ENCODE measurements at regions of chr15 and their contacts with region 1.

Region 1: DNA sequence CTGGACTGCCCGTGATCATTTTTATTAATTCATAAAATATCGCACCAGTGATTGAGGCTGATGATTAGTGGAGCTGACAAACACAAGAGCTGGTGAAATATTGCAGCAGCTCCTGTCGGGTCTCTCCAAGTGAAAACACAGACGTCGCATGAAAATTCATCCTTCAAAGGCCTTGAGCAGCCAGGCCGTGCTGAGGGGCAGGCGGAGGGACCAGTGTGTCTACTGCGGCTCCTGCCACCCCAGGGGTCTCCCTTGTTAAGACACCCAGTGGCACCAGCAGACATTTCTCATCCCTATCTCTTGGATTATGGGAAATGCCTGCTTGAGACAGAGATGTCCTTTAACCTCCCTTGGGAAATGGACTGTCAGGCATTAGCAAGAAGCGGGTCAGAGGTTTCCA is 289.4 kb upstream of the TLE3 start:
- DNase-seq: no peak
- ATAC-seq: no peak
- H3K4me3 ChIP-seq: no peak overlapping the region
- H3K4me3 Mint-ChIP-seq: no peak overlapping the region
- H3K27ac ChIP-seq: peak overlapping the region in 1 of 2 donors; percentile 30
- H3K27ac Mint-ChIP-seq: no peak overlapping the region
- H3K4me1 ChIP-seq: peaks cover 20 to 22% of the 10 kb centered on the region in 2 donors
- H3K4me1 Mint-ChIP-seq: peaks cover 20% of the 10 kb centered on the region
- H3K27me3 ChIP-seq: no peaks in the 10 kb centered on the region
- H3K27me3 Mint-ChIP-seq: no peaks in the 10 kb centered on the region
- CTCF ChIP-seq: no peak

Region 2: GRCh38 chr15:70327856-70328678 is 59.0 kb before region 1 on chr15:
- CTCF ChIA-PET with region 1: no interaction called
- POLR2A ChIA-PET with region 1: no interaction called
- intact Hi-C with region 1: loop called (anchors 1 kb)
- DNase-seq: peak; percentile 77
- ATAC-seq: peak; percentile 90
- H3K4me3 ChIP-seq: no peak overlapping the region
- H3K4me3 Mint-ChIP-seq: peak overlapping the region; percentile 62
- H3K27ac ChIP-seq: peak overlapping the region; percentile 32 to 39
- H3K27ac Mint-ChIP-seq: peak overlapping the region; percentile 74
- H3K4me1 ChIP-seq: peaks cover 22 to 32% of the 10 kb centered on the region in 2 donors
- H3K4me1 Mint-ChIP-seq: peaks cover 33% of the 10 kb centered on the region
- H3K27me3 ChIP-seq: no peaks in the 10 kb centered on the region
- H3K27me3 Mint-ChIP-seq: no peaks in the 10 kb centered on the region
- CTCF ChIP-seq: no peak